MCF 10A (cell line): ENCODE measurements at regions of chr22 and their contacts with region 1.

Region 1: GRCh38 chr22:35840302-35840739 is 122.6 kb downstream of the APOL5 start:
- DNase-seq: peak; percentile 97
- H3K4me3 Mint-ChIP-seq: peak overlapping the region; percentile 84
- H3K27ac Mint-ChIP-seq: peak overlapping the region; percentile 83
- H3K4me1 Mint-ChIP-seq: peaks cover 55% of the 10 kb centered on the region
- H3K27me3 Mint-ChIP-seq: no peaks in the 10 kb centered on the region
- CTCF ChIP-seq: no peak

Region 2: DNA sequence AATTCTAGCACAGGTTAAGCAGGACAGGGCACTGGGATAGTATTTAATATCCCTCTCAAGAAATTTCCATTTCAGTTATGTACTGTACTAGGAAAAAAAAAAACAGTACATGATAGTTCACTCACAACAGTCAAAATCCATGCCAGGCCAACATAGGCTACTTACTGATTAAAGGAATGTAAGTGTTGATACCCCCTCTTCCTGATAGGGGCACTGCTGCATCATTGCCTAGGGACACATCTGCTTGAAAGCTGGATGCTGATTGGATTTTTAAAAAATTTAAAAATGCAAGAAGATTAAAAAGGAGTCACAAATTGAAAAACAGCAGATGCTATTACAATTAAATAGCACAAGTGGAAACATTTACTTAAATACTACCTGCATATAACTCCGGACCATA is 79.3 kb before region 1 on chr22:
- CTCF ChIA-PET with region 1: interaction called, 3 read pairs
- POLR2A ChIA-PET with region 1: interaction called, 3 read pairs
- intact Hi-C with region 1: loop called (anchors 5 kb)
- DNase-seq: peak; percentile 36
- H3K4me3 Mint-ChIP-seq: no peak overlapping the region
- H3K27ac Mint-ChIP-seq: peak overlapping the region; percentile 23
- H3K4me1 Mint-ChIP-seq: no peaks in the 10 kb centered on the region
- H3K27me3 Mint-ChIP-seq: no peaks in the 10 kb centered on the region
- CTCF ChIP-seq: peak; percentile 34

Region 3: GRCh38 chr22:35785181-35785923 is 55.0 kb before region 1 on chr22:
- CTCF ChIA-PET with region 1: interaction called, 5 read pairs
- POLR2A ChIA-PET with region 1: interaction called, 9 read pairs
- intact Hi-C with region 1: loop called (anchors 2 kb)
- DNase-seq: peak; percentile 36
- H3K4me3 Mint-ChIP-seq: no peak overlapping the region
- H3K27ac Mint-ChIP-seq: peak overlapping the region; percentile 42
- H3K4me1 Mint-ChIP-seq: peaks cover 31% of the 10 kb centered on the region
- H3K27me3 Mint-ChIP-seq: no peaks in the 10 kb centered on the region
- CTCF ChIP-seq: no peak

Region 4: GRCh38 chr22:35894937-35895708 is 54.8 kb after region 1 on chr22:
- CTCF ChIA-PET with region 1: interaction called, 14 read pairs
- POLR2A ChIA-PET with region 1: interaction called, 155 read pairs
- intact Hi-C with region 1: loop called (anchors 1 kb)
- DNase-seq: peak; percentile 96
- H3K4me3 Mint-ChIP-seq: peak overlapping the region; percentile 79
- H3K27ac Mint-ChIP-seq: peak overlapping the region; percentile 90
- H3K4me1 Mint-ChIP-seq: peaks cover 42% of the 10 kb centered on the region
- H3K27me3 Mint-ChIP-seq: no peaks in the 10 kb centered on the region
- CTCF ChIP-seq: no peak

Region 5: GRCh38 chr22:35914665-35915476 is 74.5 kb after region 1 on chr22:
- CTCF ChIA-PET with region 1: interaction called, 27 read pairs
- POLR2A ChIA-PET with region 1: interaction called, 247 read pairs
- intact Hi-C with region 1: loop called (anchors 1 kb)
- DNase-seq: peak; percentile 95
- H3K4me3 Mint-ChIP-seq: peak overlapping the region; percentile 75
- H3K27ac Mint-ChIP-seq: peak overlapping the region; percentile 91
- H3K4me1 Mint-ChIP-seq: peaks cover 53% of the 10 kb centered on the region
- H3K27me3 Mint-ChIP-seq: no peaks in the 10 kb centered on the region
- CTCF ChIP-seq: no peak

Region 6: GRCh38 chr22:36123673-36124630 is 283.6 kb after region 1 on chr22:
- CTCF ChIA-PET with region 1: interaction called, 4 read pairs
- POLR2A ChIA-PET with region 1: no interaction called
- intact Hi-C with region 1: loop called (anchors 5 kb)
- DNase-seq: peak; percentile 88
- H3K4me3 Mint-ChIP-seq: peak overlapping the region; percentile 66
- H3K27ac Mint-ChIP-seq: peak overlapping the region; percentile 73
- H3K4me1 Mint-ChIP-seq: peaks cover 9% of the 10 kb centered on the region
- H3K27me3 Mint-ChIP-seq: peaks cover 28% of the 10 kb centered on the region
- CTCF ChIP-seq: peak; percentile 93

Region 7: GRCh38 chr22:36853407-36854099 is 1013.2 kb after region 1 on chr22:
- CTCF ChIA-PET with region 1: no interaction called
- POLR2A ChIA-PET with region 1: no interaction called
- intact Hi-C with region 1: no loop called
- DNase-seq: peak; percentile 52
- H3K4me3 Mint-ChIP-seq: no peak overlapping the region
- H3K27ac Mint-ChIP-seq: no peak overlapping the region
- H3K4me1 Mint-ChIP-seq: peaks cover 5% of the 10 kb centered on the region
- H3K27me3 Mint-ChIP-seq: peaks cover 55% of the 10 kb centered on the region
- CTCF ChIP-seq: peak; percentile 48